ENCODE measurements at regions of chr11 and their contacts with region 1.

Region 1: GRCh38 chr11:123246749-123247495 is 51.9 kb upstream of the CLMP start:
- DNase-seq: peak; percentile 73
- ATAC-seq: peak; percentile 81
- H3K4me3 ChIP-seq: no peak overlapping the region
- H3K4me3 Mint-ChIP-seq: peak overlapping the region; percentile 16
- H3K27ac ChIP-seq: no peak overlapping the region
- H3K27ac Mint-ChIP-seq: no peak overlapping the region
- H3K4me1 ChIP-seq: peaks cover 0 to 3% of the 10 kb centered on the region in 2 donors
- H3K4me1 Mint-ChIP-seq: peaks cover 5% of the 10 kb centered on the region
- H3K27me3 ChIP-seq: no peaks in the 10 kb centered on the region
- H3K27me3 Mint-ChIP-seq: peaks cover 16% of the 10 kb centered on the region
- CTCF ChIP-seq: peak; percentile 96

Region 2: DNA sequence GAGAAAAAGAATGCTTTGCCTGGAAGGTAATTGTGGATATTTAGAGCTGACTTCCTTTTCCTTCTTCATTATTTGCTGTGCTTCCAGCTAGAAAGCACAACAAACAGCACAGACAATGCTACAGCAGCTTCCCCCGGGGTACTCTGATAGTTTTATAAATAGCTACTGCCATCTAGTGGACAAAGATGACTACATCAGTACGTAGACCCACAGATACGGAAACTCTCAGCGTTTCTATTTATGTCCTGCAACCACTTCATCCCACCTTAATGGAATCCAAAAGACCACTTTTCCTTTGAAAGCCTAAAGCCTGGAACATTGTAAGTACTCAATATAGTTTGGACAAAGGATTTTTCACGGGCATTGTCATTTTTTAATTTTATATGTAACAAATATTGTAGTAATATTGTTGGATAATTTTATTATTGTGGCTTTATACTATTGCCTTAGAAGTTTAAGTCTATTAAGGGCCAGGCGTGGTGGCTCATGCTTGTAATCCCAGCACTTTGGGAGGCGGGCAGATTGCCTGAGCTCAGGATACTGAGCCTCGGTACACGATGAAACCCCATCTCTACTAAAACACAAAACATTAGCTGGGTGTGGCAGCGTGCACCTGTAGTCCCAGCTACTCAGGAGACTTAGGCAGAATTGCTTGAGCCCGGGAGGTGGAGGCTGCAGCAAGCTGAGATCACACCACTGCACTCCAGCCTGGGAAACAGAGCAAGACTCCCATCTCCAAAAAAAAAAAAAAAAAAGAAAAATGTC is 192.4 kb before region 1 on chr11:
- CTCF ChIA-PET with region 1: interaction called, 12 read pairs
- POLR2A ChIA-PET with region 1: no interaction called
- intact Hi-C with region 1: no loop called
- DNase-seq: peak; percentile 79
- ATAC-seq: peak; percentile 87
- H3K4me3 ChIP-seq: no peak overlapping the region
- H3K4me3 Mint-ChIP-seq: peak overlapping the region; percentile 38
- H3K27ac ChIP-seq: no peak overlapping the region
- H3K27ac Mint-ChIP-seq: peak overlapping the region; percentile 85
- H3K4me1 ChIP-seq: peaks cover 35 to 46% of the 10 kb centered on the region in 2 donors
- H3K4me1 Mint-ChIP-seq: peaks cover 56% of the 10 kb centered on the region
- H3K27me3 ChIP-seq: no peaks in the 10 kb centered on the region
- H3K27me3 Mint-ChIP-seq: no peaks in the 10 kb centered on the region
- CTCF ChIP-seq: peak; percentile 83

Region 3: DNA sequence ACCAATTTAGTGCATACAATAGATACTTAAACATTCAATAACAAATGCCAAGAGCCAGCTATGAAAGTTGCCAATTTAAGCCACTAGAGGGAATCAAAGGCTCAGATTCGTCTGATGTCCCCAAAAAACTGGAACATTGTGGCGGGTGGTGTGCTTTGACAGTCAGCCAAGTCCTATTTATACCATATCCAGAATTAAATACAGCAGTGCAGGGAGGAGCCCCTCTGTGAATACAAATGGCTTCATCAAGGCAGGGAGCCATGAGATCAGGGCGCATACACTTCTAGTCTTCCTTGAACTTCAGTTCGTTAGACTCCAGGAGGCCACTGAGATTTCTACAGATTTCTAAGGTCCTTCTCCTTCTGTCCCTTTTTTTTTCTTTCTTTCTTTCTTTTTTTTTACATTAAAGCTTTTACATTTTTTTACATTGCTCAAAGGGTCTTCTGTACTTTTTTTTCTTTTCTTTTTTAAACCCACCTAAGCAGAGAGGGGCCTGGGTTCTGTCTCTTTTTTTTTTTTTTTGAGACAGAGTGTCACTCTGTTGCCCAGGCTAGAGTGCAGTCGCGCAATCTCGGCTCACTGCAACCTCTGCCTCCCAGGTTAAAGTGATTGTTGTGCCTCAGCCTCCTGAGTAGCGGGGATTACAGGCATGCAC is 143.5 kb before region 1 on chr11:
- CTCF ChIA-PET with region 1: interaction called, 21 read pairs
- POLR2A ChIA-PET with region 1: no interaction called
- intact Hi-C with region 1: loop called (anchors 1 kb)
- DNase-seq: peak; percentile 40
- ATAC-seq: no peak
- H3K4me3 ChIP-seq: no peak overlapping the region
- H3K4me3 Mint-ChIP-seq: no peak overlapping the region
- H3K27ac ChIP-seq: no peak overlapping the region
- H3K27ac Mint-ChIP-seq: no peak overlapping the region
- H3K4me1 ChIP-seq: no peaks in the 10 kb centered on the region
- H3K4me1 Mint-ChIP-seq: peaks cover 3% of the 10 kb centered on the region
- H3K27me3 ChIP-seq: peaks cover 0 to 2% (median 0%) of the 10 kb centered on the region in 4 experiments
- H3K27me3 Mint-ChIP-seq: peaks cover 24% of the 10 kb centered on the region
- CTCF ChIP-seq: peak; percentile 61

Region 4: DNA sequence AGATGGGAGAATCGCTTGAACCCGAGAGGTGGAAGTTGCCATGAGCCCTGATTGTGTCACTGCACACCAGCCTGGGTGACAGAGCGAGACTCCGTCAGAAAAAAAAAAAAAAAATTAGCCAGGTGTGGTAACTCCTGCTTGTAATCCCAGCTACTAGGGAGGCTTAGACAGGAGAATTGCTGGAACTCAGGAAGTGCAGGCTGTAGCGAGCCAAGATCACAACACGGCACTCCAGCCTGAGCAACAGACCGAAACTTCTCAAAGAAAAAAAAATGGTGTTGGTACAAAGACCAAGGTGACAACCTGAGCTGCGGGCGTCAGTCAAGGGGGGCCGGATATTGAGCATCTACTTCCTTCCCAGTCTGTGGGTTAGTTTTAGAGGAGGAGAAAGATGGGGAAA is 136.6 kb before region 1 on chr11:
- CTCF ChIA-PET with region 1: interaction called, 11 read pairs
- POLR2A ChIA-PET with region 1: no interaction called
- intact Hi-C with region 1: no loop called
- DNase-seq: no peak
- ATAC-seq: no peak
- H3K4me3 ChIP-seq: no peak overlapping the region
- H3K4me3 Mint-ChIP-seq: no peak overlapping the region
- H3K27ac ChIP-seq: no peak overlapping the region
- H3K27ac Mint-ChIP-seq: no peak overlapping the region
- H3K4me1 ChIP-seq: no peaks in the 10 kb centered on the region
- H3K4me1 Mint-ChIP-seq: no peaks in the 10 kb centered on the region
- H3K27me3 ChIP-seq: peaks cover 0 to 3% (median 0%) of the 10 kb centered on the region in 4 experiments
- H3K27me3 Mint-ChIP-seq: peaks cover 18% of the 10 kb centered on the region
- CTCF ChIP-seq: no peak

Region 5: DNA sequence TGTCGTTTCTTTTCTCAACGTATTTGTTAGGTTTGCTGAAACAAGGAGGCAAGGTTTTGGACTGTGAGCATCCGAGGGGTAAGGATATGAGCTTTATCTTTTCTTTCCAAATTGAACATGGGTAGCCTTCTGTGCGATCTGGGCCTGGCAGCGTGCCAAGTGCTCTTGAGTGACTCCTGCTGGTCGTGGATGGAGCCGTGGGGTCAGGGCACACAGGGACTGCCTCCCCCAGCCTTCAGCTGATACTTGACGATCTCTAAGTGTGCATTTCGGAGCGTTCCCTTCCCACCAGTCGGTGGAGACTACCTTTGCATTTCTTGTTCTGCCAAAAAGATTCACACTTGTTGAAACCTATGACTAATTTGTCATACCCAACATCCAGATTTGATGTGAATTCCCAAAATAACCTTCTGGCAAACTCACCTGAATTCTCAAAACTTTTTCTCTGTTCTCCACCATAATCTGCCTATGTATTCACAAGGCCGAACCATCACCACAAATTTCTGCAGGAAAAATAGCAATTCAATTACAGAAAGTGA is 11.7 kb before region 1 on chr11:
- CTCF ChIA-PET with region 1: interaction called, 19 read pairs
- POLR2A ChIA-PET with region 1: no interaction called
- intact Hi-C with region 1: no loop called
- DNase-seq: peak; percentile 25
- ATAC-seq: no peak
- H3K4me3 ChIP-seq: no peak overlapping the region
- H3K4me3 Mint-ChIP-seq: no peak overlapping the region
- H3K27ac ChIP-seq: no peak overlapping the region
- H3K27ac Mint-ChIP-seq: no peak overlapping the region
- H3K4me1 ChIP-seq: peaks cover 4 to 6% of the 10 kb centered on the region in 2 donors
- H3K4me1 Mint-ChIP-seq: peaks cover 10% of the 10 kb centered on the region
- H3K27me3 ChIP-seq: no peaks in the 10 kb centered on the region
- H3K27me3 Mint-ChIP-seq: peaks cover 5% of the 10 kb centered on the region
- CTCF ChIP-seq: no peak

Region 6: GRCh38 chr11:123308077-123308476 is 61.2 kb after region 1 on chr11:
- CTCF ChIA-PET with region 1: no interaction called
- POLR2A ChIA-PET with region 1: no interaction called
- intact Hi-C with region 1: no loop called
- DNase-seq: no peak
- ATAC-seq: no peak
- H3K4me3 ChIP-seq: no peak overlapping the region
- H3K4me3 Mint-ChIP-seq: no peak overlapping the region
- H3K27ac ChIP-seq: no peak overlapping the region
- H3K27ac Mint-ChIP-seq: no peak overlapping the region
- H3K4me1 ChIP-seq: peaks cover 0 to 5% of the 10 kb centered on the region in 2 donors
- H3K4me1 Mint-ChIP-seq: peaks cover 9% of the 10 kb centered on the region
- H3K27me3 ChIP-seq: no peaks in the 10 kb centered on the region
- H3K27me3 Mint-ChIP-seq: no peaks in the 10 kb centered on the region
- CTCF ChIP-seq: no peak

Region 7: DNA sequence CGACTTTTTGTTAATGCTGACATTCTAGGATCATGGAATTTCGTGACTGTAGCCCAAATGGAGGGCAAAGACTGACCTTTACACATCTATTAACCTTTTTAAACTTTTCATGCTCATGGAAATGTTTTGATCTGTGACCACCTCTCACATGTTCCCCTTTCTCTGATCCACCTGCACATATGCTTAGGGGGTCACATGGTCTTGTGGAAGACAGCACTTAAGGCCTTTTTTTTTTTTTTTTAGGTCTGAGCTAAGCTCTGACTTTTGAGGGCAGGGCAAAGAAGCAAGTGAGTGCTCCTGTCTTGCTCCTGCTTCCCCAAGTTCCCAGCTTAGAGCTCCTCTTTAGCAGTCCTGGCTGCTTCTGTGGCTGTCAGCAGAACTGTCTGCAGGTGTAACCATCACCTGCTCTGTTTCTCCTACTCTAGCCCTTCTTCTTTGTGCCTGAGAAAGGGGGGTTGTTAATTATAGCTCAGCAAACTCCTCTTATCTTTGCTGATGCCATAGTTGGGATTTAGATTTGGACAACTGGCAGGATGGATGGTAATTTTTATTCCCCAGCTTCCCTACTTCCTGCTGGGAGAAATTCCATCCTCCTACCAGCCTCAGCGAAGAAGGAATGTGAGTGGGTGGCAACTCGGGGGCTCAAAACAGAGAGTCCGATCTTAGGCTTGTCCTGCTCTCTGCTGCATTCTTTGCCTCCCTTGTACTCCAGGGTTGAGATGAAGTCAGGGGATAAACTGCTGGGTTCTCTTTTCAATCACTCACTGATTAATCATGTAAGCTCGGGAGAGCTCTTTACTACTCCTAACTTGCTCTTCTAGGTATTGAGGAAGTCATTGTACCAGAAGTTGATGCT is 247.5 kb after region 1 on chr11:
- CTCF ChIA-PET with region 1: no interaction called
- POLR2A ChIA-PET with region 1: no interaction called
- intact Hi-C with region 1: no loop called
- DNase-seq: no peak
- ATAC-seq: peak; percentile 77
- H3K4me3 ChIP-seq: no peak overlapping the region
- H3K4me3 Mint-ChIP-seq: peak overlapping the region; percentile 11
- H3K27ac ChIP-seq: no peak overlapping the region
- H3K27ac Mint-ChIP-seq: peak overlapping the region; percentile 60
- H3K4me1 ChIP-seq: peaks cover 0 to 7% of the 10 kb centered on the region in 2 donors
- H3K4me1 Mint-ChIP-seq: peaks cover 22% of the 10 kb centered on the region
- H3K27me3 ChIP-seq: no peaks in the 10 kb centered on the region
- H3K27me3 Mint-ChIP-seq: no peaks in the 10 kb centered on the region
- CTCF ChIP-seq: no peak

Region 8: DNA sequence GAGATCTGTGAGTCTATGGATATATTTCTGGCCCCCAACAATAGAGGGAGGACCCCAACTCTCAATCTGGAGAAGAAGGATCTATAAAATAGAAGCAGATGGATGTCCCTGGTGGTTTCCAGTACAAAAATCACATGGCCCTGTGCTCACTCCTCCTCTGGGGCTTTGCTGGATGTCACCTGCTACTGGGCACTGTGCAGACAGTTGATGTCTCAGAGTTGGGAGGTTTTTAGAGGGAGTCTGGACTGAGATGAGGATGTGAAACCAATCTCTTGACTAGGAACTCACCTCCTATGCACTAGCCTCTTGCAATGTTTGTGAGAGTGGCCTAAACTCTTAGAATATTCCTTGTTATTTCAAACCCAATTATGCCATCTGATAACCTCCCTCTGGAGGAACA is 300.3 kb after region 1 on chr11:
- CTCF ChIA-PET with region 1: no interaction called
- POLR2A ChIA-PET with region 1: no interaction called
- intact Hi-C with region 1: no loop called
- DNase-seq: peak; percentile 24
- ATAC-seq: peak; percentile 73
- H3K4me3 ChIP-seq: no peak overlapping the region
- H3K4me3 Mint-ChIP-seq: no peak overlapping the region
- H3K27ac ChIP-seq: no peak overlapping the region
- H3K27ac Mint-ChIP-seq: peak overlapping the region; percentile 23
- H3K4me1 ChIP-seq: peaks cover 0 to 19% of the 10 kb centered on the region in 2 donors
- H3K4me1 Mint-ChIP-seq: peaks cover 20% of the 10 kb centered on the region
- H3K27me3 ChIP-seq: no peaks in the 10 kb centered on the region
- H3K27me3 Mint-ChIP-seq: no peaks in the 10 kb centered on the region
- CTCF ChIP-seq: no peak

Measured in B cell (primary cell).